ENCODE measurements at regions of chr12 and their contacts with region 1.

Region 1: DNA sequence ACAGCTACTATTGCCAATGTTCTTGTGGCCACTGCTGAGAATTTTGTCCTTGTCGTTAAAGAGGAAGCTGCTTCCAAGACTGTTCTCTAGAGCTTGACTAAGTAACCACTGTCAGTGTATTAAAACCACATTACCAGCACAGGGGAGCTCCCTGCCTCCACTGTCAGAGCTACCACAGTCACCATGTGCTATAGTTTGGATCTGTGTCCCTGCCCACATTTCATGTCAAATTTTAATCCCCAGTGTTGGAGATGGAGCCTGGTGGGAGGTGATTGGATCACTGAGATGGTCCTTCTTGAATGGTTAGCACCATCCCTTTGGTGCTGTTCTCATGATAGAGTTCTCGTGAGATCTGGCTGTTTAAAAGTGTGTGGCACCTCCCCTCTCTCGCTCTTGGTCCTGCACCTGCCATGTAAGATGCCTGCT is 23.2 kb upstream of the RAP1B start:
- DNase-seq: peak in 9 of 10 donors; percentile 17 to 74 (median 44)
- ATAC-seq: peak; percentile 72 to 79
- H3K4me3 Mint-ChIP-seq: peak overlapping the region; percentile 34 to 75 (median 65)
- H3K27ac Mint-ChIP-seq: peak overlapping the region; percentile 60 to 95 (median 92)
- H3K4me1 Mint-ChIP-seq: peaks cover 28 to 75% (median 68%) of the 10 kb centered on the region in 4 donors
- H3K27me3 Mint-ChIP-seq: no peaks in the 10 kb centered on the region

Region 2: GRCh38 chr12:68440068-68440581 is 147.3 kb before region 1 on chr12:
- POLR2A ChIA-PET with region 1: no interaction called
- DNase-seq: no peak
- ATAC-seq: no peak
- H3K4me3 Mint-ChIP-seq: no peak overlapping the region
- H3K27ac Mint-ChIP-seq: peak overlapping the region in 1 of 10 donors; percentile 8
- H3K4me1 Mint-ChIP-seq: peaks cover 7 to 58% (median 22%) of the 10 kb centered on the region in 4 donors
- H3K27me3 Mint-ChIP-seq: no peaks in the 10 kb centered on the region

Region 3: GRCh38 chr12:68538726-68539614 is 48.5 kb before region 1 on chr12:
- POLR2A ChIA-PET with region 1: interaction called, 19 read pairs
- DNase-seq: peak; percentile 15 to 88 (median 66)
- ATAC-seq: peak; percentile 92 to 98
- H3K4me3 Mint-ChIP-seq: peak overlapping the region; percentile 58 to 84 (median 73)
- H3K27ac Mint-ChIP-seq: peak overlapping the region; percentile 84 to 96 (median 92)
- H3K4me1 Mint-ChIP-seq: peaks cover 20 to 63% (median 55%) of the 10 kb centered on the region in 4 donors
- H3K27me3 Mint-ChIP-seq: no peaks in the 10 kb centered on the region

Region 4: GRCh38 chr12:68602720-68603119 is 15.3 kb after region 1 on chr12:
- POLR2A ChIA-PET with region 1: interaction called, 129 read pairs
- DNase-seq: no peak
- ATAC-seq: no peak
- H3K4me3 Mint-ChIP-seq: no peak overlapping the region
- H3K27ac Mint-ChIP-seq: no peak overlapping the region
- H3K4me1 Mint-ChIP-seq: peaks cover 23 to 67% (median 47%) of the 10 kb centered on the region in 4 donors
- H3K27me3 Mint-ChIP-seq: no peaks in the 10 kb centered on the region